ENCODE measurements at regions of chr15 and their contacts with region 1.

Region 1: GRCh38 chr15:47196057-47196456 is 521.2 kb upstream of the SEMA6D start:
- DNase-seq: peak; percentile 50
- CTCF ChIP-seq: peak; percentile 75

Region 2: GRCh38 chr15:47987908-47988532 is 792.0 kb after region 1 on chr15:
- in situ Hi-C with region 1: loop called (anchors 25 kb)
- DNase-seq: peak; percentile 37
- CTCF ChIP-seq: peak; percentile 36

Region 3: DNA sequence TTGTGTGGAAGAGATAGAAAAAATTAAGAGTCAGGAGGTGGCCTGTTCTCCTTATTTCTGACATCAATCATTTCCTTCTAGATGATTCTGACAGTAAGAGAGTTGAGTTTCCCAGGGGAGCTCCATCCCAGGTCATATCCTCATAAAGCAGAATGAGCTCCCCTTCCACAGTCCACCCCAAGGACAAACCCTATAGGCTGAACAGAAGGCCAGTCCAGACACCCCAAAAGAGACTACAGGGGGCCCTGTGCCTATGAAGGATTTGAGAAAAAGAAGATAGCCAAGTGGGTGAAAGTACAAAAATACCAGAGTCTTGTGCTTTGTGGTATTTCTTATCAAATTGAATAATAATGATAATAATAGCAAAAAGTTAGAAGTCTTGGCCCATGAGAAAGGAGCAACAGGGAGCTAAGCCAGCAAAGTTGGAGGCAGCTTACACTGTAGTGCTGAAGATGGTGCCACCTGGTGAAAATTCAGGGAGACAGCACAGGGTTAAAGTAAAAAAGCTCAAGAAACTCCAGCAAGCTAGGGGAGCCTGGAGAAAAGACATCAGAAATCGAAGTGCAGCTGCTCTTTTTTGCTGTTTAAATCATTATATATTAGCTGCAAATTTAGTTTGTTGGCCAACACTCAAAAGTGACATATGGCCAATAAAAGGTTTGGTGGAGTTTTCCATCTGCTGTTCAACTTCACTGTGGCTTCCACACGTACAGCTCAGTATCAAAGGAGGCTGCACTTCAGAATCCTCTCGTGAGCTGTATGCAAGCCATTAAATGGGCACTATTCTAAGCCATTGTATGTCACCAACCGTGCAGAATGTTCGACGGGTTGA is 888.9 kb after region 1 on chr15:
- in situ Hi-C with region 1: loop called (anchors 10 kb)
- DNase-seq: peak; percentile 32
- CTCF ChIP-seq: peak; percentile 53

Region 4: DNA sequence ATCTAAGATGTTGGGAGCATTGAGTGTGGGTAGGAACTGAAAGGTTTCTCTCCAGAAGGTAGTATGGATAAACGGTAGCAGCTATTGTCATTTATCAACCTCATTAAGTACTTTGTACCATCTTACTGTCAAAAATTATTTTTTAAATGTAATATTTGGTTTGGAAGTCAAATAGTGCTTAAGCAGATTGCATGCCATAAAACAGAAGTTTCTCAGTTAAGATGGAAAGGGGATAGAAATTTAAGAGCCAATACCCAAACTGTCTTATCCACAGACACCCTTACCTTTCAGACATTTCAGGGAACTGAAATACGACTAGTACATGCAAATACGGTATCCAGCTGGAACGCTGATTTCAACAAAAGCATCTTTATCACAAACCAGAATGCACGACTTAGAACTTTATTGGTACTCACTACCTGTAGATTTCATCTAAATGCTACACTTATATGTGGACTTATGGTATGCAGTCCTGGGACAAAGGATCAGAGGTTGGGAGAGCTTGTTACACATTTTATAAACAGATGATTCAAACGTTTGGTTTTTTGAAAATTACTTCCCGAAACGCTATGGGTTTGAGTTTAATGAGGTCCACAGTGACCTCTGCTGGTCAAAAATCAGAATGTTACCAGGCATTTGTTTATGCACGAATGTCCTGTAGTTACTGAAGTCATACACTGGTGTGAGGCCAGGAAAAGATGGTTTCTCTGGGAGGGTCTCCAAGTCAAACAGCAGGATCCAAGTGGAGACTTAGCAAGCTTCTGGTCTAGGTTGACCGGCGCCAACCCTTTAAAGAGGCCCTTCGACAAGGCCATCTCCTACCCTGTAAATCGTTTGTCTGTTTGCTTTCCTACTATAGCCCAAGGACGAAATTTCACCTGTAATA is 1089.5 kb after region 1 on chr15:
- in situ Hi-C with region 1: loop called (anchors 25 kb)
- DNase-seq: peak; percentile 47
- CTCF ChIP-seq: peak; percentile 52